Posterior vena cava (tissue), 2 donors: ENCODE measurements at regions of chr4 and their contacts with region 1.

Region 1: DNA sequence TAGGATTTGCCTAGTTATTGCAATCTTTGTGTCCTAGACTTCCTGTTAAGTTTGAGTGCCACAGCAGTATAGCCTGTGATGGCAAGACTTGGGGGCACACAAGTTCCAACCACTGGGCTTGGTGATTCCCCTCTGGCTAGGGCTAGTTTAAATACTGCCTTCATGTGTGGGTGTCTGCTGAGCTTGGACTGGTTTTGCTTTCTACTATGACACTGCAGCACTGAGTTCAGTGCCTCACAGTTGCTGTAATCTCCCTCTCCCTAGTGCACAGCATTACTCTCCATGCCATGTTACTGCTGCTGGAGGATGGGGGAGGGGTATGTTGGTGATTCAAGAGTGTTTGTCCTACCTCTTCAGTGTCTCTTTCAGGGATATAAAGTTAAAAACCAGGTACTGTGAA is 379.6 kb downstream of the IL15 start:
- DNase-seq: no peak

Region 2: DNA sequence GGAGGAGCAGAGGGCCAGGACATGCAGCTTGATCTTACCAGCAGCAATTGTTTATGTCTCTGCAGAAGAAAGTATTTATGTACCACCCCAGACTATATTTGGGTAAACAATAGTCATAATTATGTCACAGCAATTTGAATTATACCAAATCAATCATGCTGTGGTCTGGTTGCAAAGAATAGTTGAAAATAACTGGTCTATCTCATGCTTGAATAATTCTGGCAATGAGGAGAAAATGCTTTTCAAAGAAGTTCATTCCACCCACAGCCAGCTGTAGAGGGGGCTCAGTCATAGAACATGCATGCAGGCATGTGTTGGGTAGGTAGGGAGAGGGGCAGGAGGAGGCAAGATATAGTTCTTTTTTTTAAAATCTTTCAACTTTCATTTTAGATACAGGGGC is 19.5 kb after region 1 on chr4:
- intact Hi-C with region 1: loop called in 1 of 2 experiments (anchors 1 kb)
- DNase-seq: no peak

Region 3: GRCh38 chr4:142615318-142615654 is 599.3 kb after region 1 on chr4:
- intact Hi-C with region 1: no loop called
- DNase-seq: no peak

Region 4: GRCh38 chr4:142703694-142704309 is 687.8 kb after region 1 on chr4:
- intact Hi-C with region 1: no loop called
- DNase-seq: no peak